CD14-positive monocyte (primary cell): ENCODE measurements at regions of chr11 and their contacts with region 1.

Region 1: DNA sequence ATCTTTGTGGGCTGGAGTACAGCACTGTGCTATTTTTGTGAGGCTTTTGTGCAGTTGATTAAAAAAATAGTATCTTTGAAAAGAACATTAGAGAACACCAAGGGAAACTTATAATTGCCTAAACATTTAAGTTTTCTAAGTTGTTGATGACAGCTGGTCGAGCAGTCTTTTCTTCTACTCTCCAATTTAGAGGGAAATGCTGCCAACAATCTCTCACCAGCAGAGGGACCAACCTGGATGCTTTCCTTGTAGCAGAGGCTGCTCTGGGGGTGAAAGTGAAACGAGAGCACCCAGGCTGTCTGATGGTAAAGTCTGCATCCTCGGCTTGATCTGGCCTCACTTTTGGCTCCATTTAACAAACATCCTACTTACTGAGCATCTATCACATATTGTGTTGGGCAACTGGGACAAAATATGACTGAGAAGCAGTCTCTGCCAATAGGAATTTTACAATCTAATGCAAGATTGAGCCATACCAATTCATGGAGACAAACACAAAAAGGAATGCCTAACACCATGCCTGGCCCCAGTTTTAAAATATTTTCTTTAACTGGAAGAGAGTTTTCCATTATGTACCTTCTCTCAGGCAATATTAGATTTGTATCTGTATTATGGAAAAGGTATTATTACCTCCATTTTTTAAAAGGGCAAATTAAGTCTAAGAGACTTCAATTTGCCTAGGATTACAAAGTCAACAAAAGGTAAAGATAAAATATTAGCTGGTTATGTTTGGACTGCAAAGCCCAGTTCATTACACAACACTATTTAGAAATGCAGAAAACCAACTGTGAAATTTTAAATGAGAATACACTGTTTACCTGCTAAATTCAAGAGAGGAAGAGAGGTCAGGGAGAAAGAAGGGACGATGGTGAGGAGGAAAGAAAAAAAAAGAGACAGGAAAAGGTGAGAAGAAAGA is 1286.7 kb upstream of the TENM4 start:
- DNase-seq: no peak
- H3K4me3 ChIP-seq: no peak overlapping the region
- H3K4me3 Mint-ChIP-seq: no peak overlapping the region
- H3K27ac ChIP-seq: no peak overlapping the region
- H3K27ac Mint-ChIP-seq: peak overlapping the region in 1 of 7 donors; percentile 9
- H3K4me1 ChIP-seq: no peaks in the 10 kb centered on the region
- H3K4me1 Mint-ChIP-seq: no peaks in the 10 kb centered on the region
- H3K27me3 ChIP-seq: no peaks in the 10 kb centered on the region
- H3K27me3 Mint-ChIP-seq: no peaks in the 10 kb centered on the region
- CTCF ChIP-seq: no peak

Region 2: DNA sequence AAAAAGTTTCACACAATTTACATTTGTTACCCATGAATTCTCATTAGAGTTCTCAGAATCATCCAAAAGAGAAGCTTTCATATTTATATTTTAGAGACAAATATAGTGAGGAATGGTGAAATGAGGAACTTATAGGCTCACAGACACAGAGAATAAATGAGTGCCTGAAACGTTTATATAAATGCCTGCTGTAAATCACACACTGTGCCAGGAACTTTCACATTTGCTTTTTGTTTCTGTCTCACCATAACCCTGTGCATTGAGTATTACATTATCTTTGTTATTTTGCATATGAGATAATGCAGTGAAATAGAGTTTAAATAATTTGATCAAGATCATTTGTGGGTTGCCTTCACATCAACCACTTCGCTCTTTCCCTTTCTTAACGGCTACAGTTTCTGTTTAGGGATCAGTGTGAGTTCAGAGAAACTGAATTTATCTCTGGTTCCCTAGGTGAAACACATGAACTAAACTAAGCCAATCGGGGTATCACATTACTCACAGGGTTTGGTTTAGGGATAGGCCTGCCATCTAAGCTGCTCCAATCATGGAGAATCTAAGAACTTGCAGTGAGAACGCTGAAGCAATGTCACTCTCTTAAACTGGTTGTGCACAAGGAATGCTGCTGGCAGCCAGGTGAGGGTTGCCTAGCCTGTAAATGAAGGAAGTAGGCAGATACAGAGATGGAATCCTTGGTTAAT is 52.5 kb after region 1 on chr11:
- intact Hi-C with region 1: loop called in 1 of 2 experiments (anchors 10 kb)
- DNase-seq: no peak
- H3K4me3 ChIP-seq: no peak overlapping the region
- H3K4me3 Mint-ChIP-seq: no peak overlapping the region
- H3K27ac ChIP-seq: no peak overlapping the region
- H3K27ac Mint-ChIP-seq: no peak overlapping the region
- H3K4me1 ChIP-seq: no peaks in the 10 kb centered on the region
- H3K4me1 Mint-ChIP-seq: no peaks in the 10 kb centered on the region
- H3K27me3 ChIP-seq: no peaks in the 10 kb centered on the region
- H3K27me3 Mint-ChIP-seq: peaks cover 0 to 2% (median 0%) of the 10 kb centered on the region in 3 donors
- CTCF ChIP-seq: no peak